Endothelial cell of umbilical vein (primary cell): ENCODE measurements at regions of chr5 and their contacts with region 1.

Region 1: DNA sequence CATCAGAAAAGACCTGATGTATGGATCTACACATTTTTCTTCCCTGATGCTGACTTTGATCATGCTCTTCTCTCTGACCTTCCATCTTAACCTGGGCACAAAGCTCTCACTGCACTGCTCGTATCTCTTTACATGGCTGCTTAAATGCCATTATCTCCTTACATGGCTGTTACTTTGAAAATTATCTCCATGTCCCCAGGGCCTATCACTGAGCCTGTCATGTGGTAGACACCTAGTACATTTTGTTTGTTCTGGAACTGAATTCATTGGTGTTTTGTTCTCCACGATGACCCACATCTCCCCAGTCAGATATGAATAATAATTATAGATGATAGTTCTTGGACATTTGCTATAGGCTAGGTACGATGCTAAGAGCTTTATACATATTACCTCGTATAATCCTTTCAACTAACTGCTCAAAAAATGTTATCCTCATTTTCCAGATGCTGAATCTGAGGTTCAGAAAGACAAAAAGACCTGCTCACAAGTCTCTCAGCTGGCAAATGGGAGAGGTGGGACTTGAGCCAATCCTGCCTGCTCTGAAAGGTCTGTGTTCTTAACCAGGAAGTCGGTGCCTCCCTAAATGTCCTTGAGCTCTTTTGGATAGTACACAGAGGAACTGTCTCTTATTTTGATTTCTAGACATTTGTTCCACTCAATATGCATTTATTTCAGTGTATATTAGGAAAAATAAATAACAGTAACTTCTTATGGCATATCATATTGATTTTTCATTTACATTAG is 9.8 kb upstream of the CPEB4 start:
- DNase-seq: peak; percentile 29
- H3K4me3 ChIP-seq: no peak overlapping the region
- H3K27ac ChIP-seq: no peak overlapping the region
- H3K4me1 ChIP-seq: no peaks in the 10 kb centered on the region
- H3K27me3 ChIP-seq: no peaks in the 10 kb centered on the region
- CTCF ChIP-seq: no peak
- POLR2A ChIP-seq: no peak

Region 2: GRCh38 chr5:173075139-173075982 is 803.0 kb before region 1 on chr5:
- CTCF ChIA-PET with region 1: no interaction called
- POLR2A ChIA-PET with region 1: no interaction called
- dilution Hi-C with region 1: no loop called
- intact Hi-C with region 1: loop called (anchors 5 kb)
- DNase-seq: no peak
- H3K4me3 ChIP-seq: no peak overlapping the region
- H3K27ac ChIP-seq: no peak overlapping the region
- H3K4me1 ChIP-seq: no peaks in the 10 kb centered on the region
- H3K27me3 ChIP-seq: no peaks in the 10 kb centered on the region
- CTCF ChIP-seq: no peak
- POLR2A ChIP-seq: no peak